Activated T-helper 2 cell treated with anti-CD3 and anti-CD28 coated beads, Interferon-gamma antibody, Interleukin-2, Interleukin-4, amounts not matched to agents 10 μg/mL and 5 μg/mL and 100 μg/mL, durations not matched to agents 14 hours and 24 hours and 36 hours (primary cell): ENCODE measurements at regions of chr7 and their contacts with region 1.

Region 1: DNA sequence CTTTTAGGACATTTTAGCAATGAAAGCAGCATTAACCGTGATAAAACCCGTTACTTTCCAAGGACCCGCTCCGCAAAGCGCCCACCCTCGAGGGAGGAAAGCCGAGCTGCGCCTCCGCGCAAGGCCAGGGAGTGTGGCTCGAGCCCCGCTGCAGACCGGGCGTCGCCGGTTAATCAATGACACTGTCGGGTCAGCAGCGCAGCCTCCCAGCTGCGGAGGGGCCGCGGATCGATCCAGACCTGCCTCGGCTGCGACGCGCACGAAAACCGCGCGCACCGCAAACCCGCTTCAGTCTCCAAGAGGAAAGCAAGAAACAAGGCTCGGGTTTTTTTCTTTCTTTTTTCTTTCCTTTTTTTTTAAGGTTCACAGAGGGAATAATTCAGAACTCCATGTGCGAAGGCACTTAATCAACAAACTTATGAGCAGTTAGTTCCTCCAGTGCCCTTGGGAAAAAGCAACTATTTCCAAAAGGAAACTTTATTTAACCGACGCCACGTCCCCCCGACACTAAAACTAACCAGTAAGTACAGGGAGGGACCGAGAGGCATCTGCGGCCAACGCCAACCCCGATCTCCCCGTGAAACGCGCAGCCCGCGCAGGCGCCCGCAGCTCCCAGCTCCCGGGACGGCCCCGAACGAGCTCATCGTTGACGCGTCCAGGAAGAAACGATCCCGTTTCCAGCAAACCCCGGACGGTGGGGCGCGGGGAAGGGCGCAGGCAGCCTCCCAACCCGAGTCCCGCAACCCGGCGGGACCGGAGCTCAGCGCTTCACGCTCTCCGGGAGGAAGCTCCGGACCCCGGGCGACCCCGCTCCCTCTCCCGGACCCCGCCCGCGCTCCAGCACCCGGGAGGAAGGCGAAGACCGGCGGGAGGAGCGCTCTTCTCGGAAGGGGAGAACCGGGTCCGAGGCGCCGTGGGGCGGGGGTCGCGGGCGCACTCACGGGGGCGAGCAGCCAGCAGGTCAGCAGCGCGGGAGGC is 598 bp downstream of the VIPR2 start:
- DNase-seq: peak; percentile 19
- H3K4me3 Mint-ChIP-seq: peak overlapping the region; percentile 75
- H3K27ac Mint-ChIP-seq: no peak overlapping the region
- H3K4me1 Mint-ChIP-seq: peaks cover 10% of the 10 kb centered on the region
- H3K27me3 Mint-ChIP-seq: peaks cover 31% of the 10 kb centered on the region

Region 2: DNA sequence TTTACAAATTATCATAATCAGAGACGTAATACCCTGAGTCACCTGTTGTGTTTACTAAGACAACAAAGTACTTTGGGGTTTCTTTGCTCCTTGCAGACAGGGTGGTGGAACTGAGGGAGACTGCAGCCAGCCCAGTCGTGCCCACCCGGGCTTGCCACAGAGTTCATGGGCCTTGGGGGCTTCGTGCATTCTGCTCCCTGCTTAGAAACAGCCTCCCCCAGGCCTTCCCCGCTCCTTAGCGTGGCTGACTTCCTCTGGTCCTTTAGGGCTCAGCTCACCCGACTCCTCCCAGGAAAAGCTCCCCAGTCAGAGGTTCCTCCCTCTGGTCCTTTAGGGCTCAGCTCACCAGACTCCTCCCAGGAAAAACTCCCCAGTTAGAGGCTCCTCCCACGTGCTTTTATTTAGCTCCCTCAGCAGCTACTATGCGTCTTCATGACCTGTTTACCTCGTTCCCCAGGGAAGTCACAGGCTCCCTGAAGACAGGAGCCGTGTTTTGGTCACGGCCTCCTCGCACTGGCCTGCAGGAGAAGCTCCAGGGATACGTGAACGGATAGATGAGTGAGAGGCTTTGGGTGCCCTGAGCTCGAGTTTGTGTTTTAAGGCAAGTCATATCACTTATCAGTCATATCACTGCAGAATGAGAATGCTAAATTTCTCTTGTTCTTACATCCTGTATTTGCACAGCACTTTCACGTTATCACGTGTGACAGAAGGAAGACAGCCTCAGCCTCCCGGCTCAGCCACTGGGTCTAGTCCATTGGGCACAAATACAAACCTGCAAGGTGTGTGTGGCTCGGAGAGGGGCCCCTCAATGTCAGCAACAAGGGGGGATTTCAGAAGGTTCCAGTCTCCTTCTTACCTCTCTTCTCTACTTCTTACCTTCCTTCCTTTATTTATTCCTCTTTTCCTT is 53.3 kb after region 1 on chr7:
- intact Hi-C with region 1: loop called (anchors 5 kb)
- DNase-seq: peak; percentile 55
- H3K4me3 Mint-ChIP-seq: peak overlapping the region; percentile 78
- H3K27ac Mint-ChIP-seq: peak overlapping the region; percentile 97
- H3K4me1 Mint-ChIP-seq: peaks cover 35% of the 10 kb centered on the region
- H3K27me3 Mint-ChIP-seq: no peaks in the 10 kb centered on the region